Heart right ventricle (tissue), 16 donors: ENCODE measurements at regions of chr6 and their contacts with region 1.

Region 1: DNA sequence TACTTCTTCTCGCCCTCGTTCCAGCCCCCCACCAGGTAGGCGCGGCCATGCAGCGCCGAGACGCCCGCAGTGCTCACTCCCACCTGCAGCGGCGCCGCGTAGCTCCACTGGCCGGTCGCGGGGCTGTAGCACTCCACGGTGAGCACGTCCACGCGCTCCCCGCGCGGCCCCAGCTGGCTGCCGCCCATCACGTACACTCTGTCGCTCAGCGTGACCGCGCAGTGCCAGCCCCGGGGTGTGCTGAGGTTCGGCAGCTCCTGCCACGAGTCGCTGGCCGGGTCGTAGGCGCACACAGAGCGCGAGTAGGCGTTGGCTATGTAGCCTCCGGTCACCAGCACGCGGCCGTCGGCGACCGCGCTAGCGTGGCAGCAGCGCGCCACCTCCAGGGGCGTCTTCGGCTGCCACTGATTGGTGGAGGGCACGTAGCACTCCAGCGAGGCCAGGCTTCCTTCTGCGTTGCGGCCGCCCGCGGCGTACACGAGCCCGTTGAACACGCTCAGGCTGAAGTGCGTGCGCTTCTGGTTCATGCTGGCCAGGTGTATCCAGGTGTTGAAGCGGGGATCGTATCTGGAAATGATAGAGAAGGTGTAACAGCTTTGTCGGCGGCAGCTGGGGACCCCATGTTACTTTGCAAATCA is 13.7 kb downstream of the KLHL31 start:
- DNase-seq: peak; percentile 41 to 65
- ATAC-seq: peak; percentile 77 to 88 (median 82)
- H3K4me3 ChIP-seq: peak overlapping the region; percentile 11 to 65 (median 51)
- H3K27ac ChIP-seq: peak overlapping the region in 4 of 10 donors; percentile 7 to 54 (median 30)
- H3K4me1 ChIP-seq: peaks cover 3 to 70% (median 37%) of the 10 kb centered on the region in 9 donors
- H3K27me3 ChIP-seq: peaks cover 0 to 12% (median 5%) of the 10 kb centered on the region in 7 donors
- CTCF ChIP-seq: peak in 5 of 9 donors; percentile 9 to 44 (median 35)

Region 2: DNA sequence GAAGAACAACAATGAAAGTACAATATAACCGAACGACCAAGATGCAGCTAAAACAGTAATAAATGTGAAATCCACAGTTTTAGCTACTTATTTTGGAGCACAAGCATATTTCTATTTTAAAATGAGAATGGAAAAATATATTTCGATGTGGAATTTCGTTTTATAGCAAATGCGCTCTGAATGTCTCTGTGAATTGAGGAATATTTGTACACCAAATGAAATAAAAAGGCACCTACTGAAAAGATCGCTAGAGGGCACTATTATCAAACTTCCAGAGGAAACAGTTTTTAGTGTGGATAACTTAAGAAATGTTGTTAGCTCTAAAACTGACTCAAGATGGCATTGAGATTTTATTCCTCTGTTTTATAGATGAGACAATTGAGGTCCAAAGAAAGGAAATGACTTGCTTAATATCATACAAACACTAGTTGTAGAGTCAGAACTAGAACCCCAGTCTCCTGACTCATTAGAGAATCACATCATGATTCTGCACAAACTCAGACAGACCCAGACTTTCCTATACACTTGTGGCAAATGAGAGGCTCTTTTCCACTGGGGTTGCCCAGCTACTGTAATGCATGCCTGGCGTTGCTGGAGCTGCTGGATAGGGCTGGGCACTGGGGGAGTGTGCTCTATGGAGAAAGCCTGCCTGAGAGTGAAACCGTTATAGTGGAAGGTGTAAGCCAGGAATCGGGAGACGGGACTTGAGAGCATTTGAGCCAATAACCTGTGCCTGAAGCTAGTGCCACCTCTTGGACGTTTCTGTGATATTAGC is 158.8 kb before region 1 on chr6:
- intact Hi-C with region 1: loop called in 9 of 10 experiments (anchors 1 to 5 kb)
- DNase-seq: no peak
- ATAC-seq: peak; percentile 38 to 85 (median 70)
- H3K4me3 ChIP-seq: peak overlapping the region in 5 of 10 donors; percentile 16 to 31 (median 25)
- H3K27ac ChIP-seq: no peak overlapping the region
- H3K4me1 ChIP-seq: peaks cover 0 to 12% (median 5%) of the 10 kb centered on the region in 9 donors
- H3K27me3 ChIP-seq: no peaks in the 10 kb centered on the region
- CTCF ChIP-seq: peak; percentile 51 to 87 (median 82)

Region 3: GRCh38 chr6:53504512-53504911 is 147.4 kb before region 1 on chr6:
- intact Hi-C with region 1: loop called in 5 of 10 experiments (anchors 5 kb)
- DNase-seq: no peak
- ATAC-seq: no peak
- H3K4me3 ChIP-seq: no peak overlapping the region
- H3K27ac ChIP-seq: no peak overlapping the region
- H3K4me1 ChIP-seq: no peaks in the 10 kb centered on the region
- H3K27me3 ChIP-seq: no peaks in the 10 kb centered on the region
- CTCF ChIP-seq: no peak

Region 4: GRCh38 chr6:53524455-53524815 is 127.4 kb before region 1 on chr6:
- intact Hi-C with region 1: loop called in 1 of 10 experiments (anchors 10 kb)
- DNase-seq: no peak
- ATAC-seq: peak in 1 of 8 donors; percentile 59
- H3K4me3 ChIP-seq: no peak overlapping the region
- H3K27ac ChIP-seq: peak overlapping the region in 4 of 10 donors; percentile 0 to 45 (median 24)
- H3K4me1 ChIP-seq: peaks cover 0 to 79% (median 37%) of the 10 kb centered on the region in 9 donors
- H3K27me3 ChIP-seq: no peaks in the 10 kb centered on the region
- CTCF ChIP-seq: no peak

Region 5: DNA sequence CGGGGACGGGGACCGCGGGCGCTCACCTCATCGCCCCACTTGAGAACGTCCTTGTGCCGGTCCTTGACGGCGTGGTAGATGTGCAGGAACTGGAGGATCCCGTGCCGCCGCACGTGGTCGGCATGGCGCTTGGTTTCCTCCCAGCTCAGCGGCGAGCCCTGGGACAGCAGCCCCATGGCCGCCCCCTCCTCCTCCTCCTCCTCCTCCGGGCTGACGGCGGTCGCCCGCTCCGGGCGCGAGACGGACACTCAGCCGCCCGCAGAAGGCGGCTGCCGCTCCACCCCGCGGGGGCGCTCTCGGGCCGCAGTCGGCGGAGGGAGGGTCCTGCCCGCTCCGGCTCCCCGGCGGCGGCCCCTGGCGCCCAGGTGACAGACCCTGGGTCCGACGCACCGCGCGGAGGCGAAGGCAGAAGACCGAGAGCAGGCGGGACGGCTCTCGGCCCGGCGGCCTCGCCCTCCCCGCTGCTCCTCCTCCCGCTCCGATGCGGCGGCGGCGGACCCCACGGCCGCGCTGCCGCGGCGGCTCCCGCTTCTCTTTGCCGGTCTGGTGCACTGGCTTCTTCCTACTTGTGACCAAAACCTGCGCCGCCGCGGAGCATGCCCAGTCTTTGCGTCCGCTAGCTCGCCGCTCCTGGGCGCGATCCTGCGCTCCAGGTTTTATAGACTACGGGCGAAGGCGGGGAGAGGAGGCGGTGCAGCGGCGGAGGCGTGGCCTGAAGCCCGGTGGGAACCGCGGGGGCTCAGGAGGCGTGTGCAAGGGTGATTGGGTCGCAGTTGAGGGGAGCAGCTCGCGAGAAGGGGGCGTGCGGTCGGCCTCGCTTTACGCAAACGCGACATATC is 107.2 kb before region 1 on chr6 and contains the start of gene GCLC:
- intact Hi-C with region 1: loop called in 7 of 10 experiments (anchors 2 to 10 kb)
- DNase-seq: peak; percentile 95
- ATAC-seq: peak; percentile 80 to 88 (median 83)
- H3K4me3 ChIP-seq: peak within 1 kb of the TSS; percentile 55 to 94 (median 82)
- H3K27ac ChIP-seq: peak within 1 kb of the TSS; percentile 46 to 99 (median 95)
- H3K4me1 ChIP-seq: peaks cover 0 to 56% (median 42%) of the 10 kb centered on the region in 9 donors
- H3K27me3 ChIP-seq: no peaks in the 10 kb centered on the region
- CTCF ChIP-seq: peak; percentile 49 to 88 (median 70)
- total RNA-seq, gene GCLC: 13.9 to 42.8 (median 34.6) TPM

Region 6: GRCh38 chr6:53725791-53726431 is 74.0 kb after region 1 on chr6:
- intact Hi-C with region 1: loop called in 4 of 10 experiments (anchors 10 kb)
- DNase-seq: peak; percentile 76 to 79
- ATAC-seq: peak; percentile 79 to 93 (median 89)
- H3K4me3 ChIP-seq: no peak overlapping the region
- H3K27ac ChIP-seq: no peak overlapping the region
- H3K4me1 ChIP-seq: peaks cover 0 to 10% (median 0%) of the 10 kb centered on the region in 9 donors
- H3K27me3 ChIP-seq: peaks cover 0 to 6% (median 0%) of the 10 kb centered on the region in 7 donors
- CTCF ChIP-seq: peak; percentile 90 to 97 (median 95)

Region 7: DNA sequence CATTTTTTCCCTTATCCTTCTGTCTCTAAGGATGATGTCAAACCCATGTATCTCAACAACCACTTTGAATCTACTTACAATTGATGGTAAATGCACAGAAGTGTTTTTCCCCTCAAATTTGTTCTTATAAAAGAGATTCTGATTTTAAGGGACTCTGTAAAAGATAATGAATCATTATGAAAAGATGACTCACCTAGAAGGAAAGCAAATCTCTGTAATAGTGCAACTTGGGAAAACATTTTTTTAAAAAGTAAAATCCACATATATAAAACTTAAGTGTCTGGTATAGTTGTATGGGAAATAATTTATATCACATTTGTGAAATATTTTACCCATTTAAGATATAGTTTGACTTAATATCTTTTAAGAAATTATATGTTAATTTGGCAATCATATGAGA is 793.3 kb after region 1 on chr6:
- intact Hi-C with region 1: no loop called
- DNase-seq: no peak
- ATAC-seq: no peak
- H3K4me3 ChIP-seq: no peak overlapping the region
- H3K27ac ChIP-seq: no peak overlapping the region
- H3K4me1 ChIP-seq: no peaks in the 10 kb centered on the region
- H3K27me3 ChIP-seq: no peaks in the 10 kb centered on the region
- CTCF ChIP-seq: no peak